ENCODE measurements at regions of chr16 and their contacts with region 1.

Region 1: DNA sequence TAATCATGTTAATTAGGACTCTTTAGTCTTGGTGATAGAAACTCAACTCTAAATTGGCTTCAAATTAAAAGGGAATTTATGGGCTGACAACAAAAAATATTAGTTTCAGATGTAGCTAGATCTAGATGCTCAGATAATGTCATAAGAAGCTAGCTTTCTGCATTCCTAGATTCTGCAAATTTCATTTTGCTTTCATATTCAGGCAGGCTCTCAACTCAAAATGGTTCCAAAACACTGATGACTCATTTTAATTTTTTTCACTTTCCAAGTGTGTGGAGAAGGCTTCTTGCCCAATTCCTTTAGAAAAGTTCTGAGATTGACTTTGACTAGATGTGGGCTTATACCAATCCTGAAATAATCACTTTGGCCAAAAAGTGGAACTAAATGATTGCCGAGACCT is 236.7 kb upstream of the GOT2 start:
- DNase-seq: no peak
- H3K4me3 ChIP-seq: peak overlapping the region in 2 of 3 donors; percentile 17 to 19
- H3K27ac ChIP-seq: peak overlapping the region in 1 of 2 donors; percentile 12
- H3K4me1 ChIP-seq: no peaks in the 10 kb centered on the region
- H3K27me3 ChIP-seq: no peaks in the 10 kb centered on the region
- CTCF ChIP-seq: no peak
- POLR2A ChIP-seq: no peak

Region 2: DNA sequence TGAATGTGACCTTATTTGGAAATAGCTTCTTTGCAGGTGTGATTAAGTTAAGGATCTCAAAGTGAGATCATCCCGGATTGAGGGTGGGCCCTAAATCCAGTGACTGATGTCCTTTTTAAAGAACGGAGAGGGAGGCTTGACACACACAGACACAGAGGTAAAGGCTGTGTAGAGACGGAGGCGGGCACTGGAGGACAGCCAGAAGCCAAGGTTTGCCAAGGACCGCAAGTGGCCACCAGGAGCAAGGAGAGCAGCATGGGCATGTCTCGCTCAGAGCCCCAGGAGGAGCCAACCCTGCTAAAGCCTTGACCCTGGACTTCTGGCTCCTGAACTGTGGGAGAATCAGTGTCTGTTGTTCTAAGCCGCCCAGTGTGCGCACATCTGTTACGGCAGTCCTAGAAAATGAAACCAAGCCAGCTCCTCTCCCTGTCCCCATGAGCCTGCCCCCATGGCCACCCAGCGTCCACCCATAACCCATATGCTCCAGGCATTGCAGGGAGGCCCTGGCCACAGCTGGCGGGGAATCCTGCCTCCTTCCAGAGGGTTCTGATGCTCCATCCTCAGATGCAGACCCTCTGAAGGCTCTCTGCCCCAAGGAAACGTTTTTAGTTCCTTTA is 1015.1 kb before region 1 on chr16:
- intact Hi-C with region 1: no loop called
- DNase-seq: peak; percentile 70 to 71
- H3K4me3 ChIP-seq: peak overlapping the region in 1 of 3 donors; percentile 3
- H3K27ac ChIP-seq: no peak overlapping the region
- H3K4me1 ChIP-seq: no peaks in the 10 kb centered on the region
- H3K27me3 ChIP-seq: no peaks in the 10 kb centered on the region
- CTCF ChIP-seq: peak in 1 of 3 donors; percentile 33
- POLR2A ChIP-seq: no peak

Region 3: DNA sequence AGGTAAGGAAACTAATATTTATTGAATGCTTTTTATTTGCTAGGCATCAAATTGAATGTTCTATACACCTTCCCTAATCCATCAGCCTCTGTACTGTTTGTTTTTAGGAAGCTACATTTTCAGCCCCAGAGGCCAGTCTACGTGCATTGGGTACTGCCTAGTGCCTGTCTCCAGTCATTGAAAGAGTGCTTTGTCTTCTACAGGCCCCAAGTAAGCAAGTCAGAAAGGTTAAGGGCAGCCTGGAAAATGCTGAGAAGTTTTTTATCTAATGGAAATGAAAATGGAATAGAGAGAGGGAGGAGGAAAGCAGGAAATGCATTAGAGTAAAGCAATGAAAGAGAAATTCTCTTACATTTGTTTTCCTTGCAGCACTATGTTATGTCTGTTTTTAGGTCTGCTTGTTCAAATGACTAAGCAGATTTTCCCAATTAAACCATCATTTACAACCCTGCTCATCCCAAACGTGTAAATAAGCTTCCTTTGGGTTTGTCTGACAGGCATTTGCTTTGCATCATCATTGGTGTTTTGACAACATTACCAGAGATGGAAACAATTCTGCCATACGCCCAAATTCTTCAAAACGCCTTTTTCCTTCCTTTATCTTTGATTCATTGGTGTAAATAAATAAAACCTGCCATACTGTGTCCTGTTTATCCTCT is 120.6 kb before region 1 on chr16:
- intact Hi-C with region 1: loop called (anchors 2 kb)
- DNase-seq: no peak
- H3K4me3 ChIP-seq: no peak overlapping the region
- H3K27ac ChIP-seq: no peak overlapping the region
- H3K4me1 ChIP-seq: no peaks in the 10 kb centered on the region
- H3K27me3 ChIP-seq: no peaks in the 10 kb centered on the region
- CTCF ChIP-seq: no peak
- POLR2A ChIP-seq: no peak

Region 4: DNA sequence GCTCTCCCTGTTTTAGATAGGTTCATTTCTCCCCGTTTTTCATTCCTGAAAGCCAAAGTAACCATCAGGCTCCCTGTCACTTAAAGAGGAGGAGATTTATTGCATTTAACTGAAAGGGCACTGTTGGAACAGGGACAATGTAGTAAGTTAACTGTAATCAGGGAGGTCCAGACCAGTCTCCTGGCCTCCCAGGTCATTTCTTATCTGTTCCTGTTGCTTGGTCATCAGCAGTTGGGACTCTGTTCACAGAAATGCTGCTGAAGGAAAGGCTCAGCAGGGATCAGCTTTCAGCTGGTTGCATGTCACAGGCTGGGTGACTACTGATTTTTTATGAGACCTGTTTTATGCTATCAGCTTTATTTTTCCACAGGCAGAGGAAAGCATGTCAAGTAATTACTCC is 385.9 kb after region 1 on chr16:
- intact Hi-C with region 1: no loop called
- DNase-seq: no peak
- H3K4me3 ChIP-seq: no peak overlapping the region
- H3K27ac ChIP-seq: no peak overlapping the region
- H3K4me1 ChIP-seq: no peaks in the 10 kb centered on the region
- H3K27me3 ChIP-seq: no peaks in the 10 kb centered on the region
- CTCF ChIP-seq: no peak
- POLR2A ChIP-seq: no peak

Measured in breast epithelium (tissue), 4 donors.